A549 (cell line): ENCODE measurements at regions of chr15 and their contacts with region 1.

Region 1: DNA sequence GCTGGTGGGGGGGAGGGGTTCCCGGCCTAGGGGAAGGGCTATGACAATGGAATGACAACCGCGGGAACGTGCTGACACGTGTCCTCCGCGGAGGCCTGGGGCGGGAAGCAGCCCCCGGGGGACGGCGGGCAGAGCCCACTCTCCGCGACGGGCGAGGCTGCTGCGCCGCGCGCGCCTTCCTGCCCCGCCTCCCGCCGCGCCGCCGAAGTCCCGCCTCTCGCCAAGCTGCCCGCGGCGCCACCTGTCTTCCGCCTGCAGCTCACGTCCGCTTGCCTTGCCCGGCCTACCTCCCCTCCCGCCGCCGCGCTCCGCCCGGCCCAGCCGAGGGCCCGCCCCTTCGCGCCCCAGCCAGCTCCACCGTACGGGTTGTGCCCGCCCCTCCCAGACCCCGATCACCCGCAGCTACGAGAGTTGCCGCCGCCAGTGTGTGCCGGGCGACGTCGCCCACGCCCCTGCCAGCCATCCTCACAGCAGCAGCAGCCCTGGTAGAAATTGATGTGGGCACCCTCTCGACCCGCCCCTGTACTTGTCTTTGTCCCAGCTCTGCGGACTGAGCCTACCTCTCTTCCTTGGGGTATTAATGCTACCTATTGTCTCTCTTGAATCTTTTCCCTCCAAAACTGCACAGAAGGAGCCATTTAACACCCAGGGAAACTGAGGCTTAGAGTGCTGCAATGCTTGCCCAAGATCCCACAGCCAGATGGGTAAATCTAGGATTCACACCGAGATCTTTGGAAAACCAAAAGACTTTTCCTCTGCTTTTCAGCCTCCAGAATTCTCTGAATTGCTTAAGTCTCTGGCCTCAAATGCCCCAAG is at the start of gene PARP16:
- DNase-seq: peak; percentile 83 to 94
- ATAC-seq: peak; percentile 94 to 95
- H3K4me3 ChIP-seq: peak within 1 kb of the TSS; percentile 65
- H3K27ac ChIP-seq: peak within 1 kb of the TSS; percentile 85 to 91
- H3K4me1 ChIP-seq: peaks cover 14% of the 10 kb centered on the region
- CTCF ChIP-seq: peak; percentile 36
- EP300 ChIP-seq: no peak
- POLR2A ChIP-seq: peak; percentile 70
- RAD21 ChIP-seq: peak in 1 of 2 experiments; percentile 22; a peak in 1 of 5 replicates
- polyA plus RNA-seq, gene PARP16: 9.8 and 11.2 TPM in 2 replicates

Region 2: GRCh38 chr15:65201905-65202304 is 85.0 kb before region 1 on chr15:
- CTCF ChIA-PET with region 1: interaction called, 408 read pairs
- POLR2A ChIA-PET with region 1: no interaction called
- DNase-seq: no peak
- ATAC-seq: no peak
- H3K4me3 ChIP-seq: no peak overlapping the region
- H3K27ac ChIP-seq: no peak overlapping the region
- H3K4me1 ChIP-seq: no peaks in the 10 kb centered on the region
- CTCF ChIP-seq: no peak
- EP300 ChIP-seq: no peak
- POLR2A ChIP-seq: no peak
- RAD21 ChIP-seq: no peak

Region 3: DNA sequence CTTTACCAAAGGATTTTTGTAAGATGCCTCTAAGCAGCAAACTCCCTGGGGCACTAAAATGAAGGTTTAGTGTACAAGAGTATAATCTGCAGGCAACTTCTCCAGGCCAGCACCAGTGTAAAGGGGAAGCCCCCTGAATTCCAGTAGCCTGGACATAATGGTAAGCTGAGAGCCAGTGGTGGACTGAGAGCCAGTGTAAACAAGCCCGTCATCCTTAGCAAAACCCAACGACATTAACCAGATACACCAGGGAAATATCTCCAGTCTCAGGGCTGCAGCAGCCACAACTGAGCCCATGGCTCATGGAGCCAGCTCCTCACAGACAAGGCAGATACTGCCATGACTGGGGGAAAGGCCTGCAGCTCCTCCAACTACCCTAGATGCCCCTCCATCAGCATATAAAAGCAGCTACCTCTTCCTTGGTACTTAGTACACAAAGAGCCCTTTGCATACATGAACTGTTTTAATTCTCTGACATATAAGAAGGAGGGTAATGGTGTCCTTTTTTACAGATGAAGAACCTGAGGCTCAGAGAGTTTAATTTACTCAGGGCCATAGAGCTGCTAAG is 22.0 kb before region 1 on chr15:
- CTCF ChIA-PET with region 1: interaction called, 127 read pairs
- POLR2A ChIA-PET with region 1: interaction called, 4 read pairs
- DNase-seq: no peak
- ATAC-seq: 0 out of 6 replicates have a peak, but pooled peaks of 1 of the 2 experiments have one; percentile 13
- H3K4me3 ChIP-seq: no peak overlapping the region
- H3K27ac ChIP-seq: no peak overlapping the region
- H3K4me1 ChIP-seq: no peaks in the 10 kb centered on the region
- CTCF ChIP-seq: no peak
- EP300 ChIP-seq: no peak
- POLR2A ChIP-seq: no peak
- RAD21 ChIP-seq: no peak

Region 4: DNA sequence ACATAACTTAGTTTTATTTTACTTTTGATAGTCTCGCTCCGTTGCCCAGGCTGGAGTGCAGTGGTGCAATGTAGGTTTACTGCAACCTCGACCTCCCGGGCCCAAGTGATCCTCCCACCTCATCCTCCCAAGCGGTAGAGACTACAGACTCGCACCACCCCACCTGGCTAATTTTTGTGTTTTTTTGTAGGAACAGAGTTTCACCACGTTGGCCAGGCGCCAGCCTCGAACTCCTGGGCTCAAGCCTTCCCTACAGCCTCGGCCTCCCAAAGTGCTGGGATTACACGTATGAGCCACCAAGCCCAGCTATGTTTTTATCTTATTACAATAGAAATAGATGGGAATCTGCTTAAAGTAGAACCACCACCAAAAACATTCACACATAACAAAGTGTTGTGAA is 11.8 kb after region 1 on chr15:
- CTCF ChIA-PET with region 1: interaction called, 54 read pairs
- POLR2A ChIA-PET with region 1: interaction called, 18 read pairs
- DNase-seq: no peak
- ATAC-seq: no peak
- H3K4me3 ChIP-seq: no peak overlapping the region
- H3K27ac ChIP-seq: no peak overlapping the region
- H3K4me1 ChIP-seq: peaks cover 23% of the 10 kb centered on the region
- CTCF ChIP-seq: no peak
- EP300 ChIP-seq: no peak
- POLR2A ChIP-seq: no peak
- RAD21 ChIP-seq: no peak

Region 5: GRCh38 chr15:65304389-65305144 is 17.7 kb after region 1 on chr15 and contains the start of gene RNU5B-1:
- CTCF ChIA-PET with region 1: interaction called, 12 read pairs
- POLR2A ChIA-PET with region 1: interaction called, 53 read pairs
- DNase-seq: peak; percentile 84 to 98
- ATAC-seq: peak; percentile 83 to 86
- H3K4me3 ChIP-seq: peak within 1 kb of the TSS; percentile 56
- H3K27ac ChIP-seq: peak within 1 kb of the TSS; percentile 85 to 91
- H3K4me1 ChIP-seq: peaks cover 23% of the 10 kb centered on the region
- CTCF ChIP-seq: no peak; the same call in 1 of the 3 replicates
- EP300 ChIP-seq: peak in 1 of 2 experiments; percentile 44; a peak in 1 of 5 replicates
- POLR2A ChIP-seq: peak; percentile 100
- RAD21 ChIP-seq: 0 out of 5 replicates have a peak, but pooled peaks of 1 of the 2 experiments have one; percentile 13
- polyA plus RNA-seq, gene RNU5B-1: not detected in 2 replicates

Region 6: GRCh38 chr15:65355173-65355987 is 68.5 kb after region 1 on chr15:
- CTCF ChIA-PET with region 1: no interaction called
- POLR2A ChIA-PET with region 1: no interaction called
- DNase-seq: no peak
- ATAC-seq: peak; percentile 37 to 55; a peak in 4 of 6 replicates
- H3K4me3 ChIP-seq: peak overlapping the region; percentile 51
- H3K27ac ChIP-seq: peak overlapping the region; percentile 26 to 78; a peak in 4 of 6 replicates
- H3K4me1 ChIP-seq: no peaks in the 10 kb centered on the region
- CTCF ChIP-seq: no peak
- EP300 ChIP-seq: no peak
- POLR2A ChIP-seq: no peak
- RAD21 ChIP-seq: no peak